ENCODE measurements at regions of chr14 and their contacts with region 1.

Region 1: GRCh38 chr14:70955543-70956480 is 48.6 kb downstream of the PCNX1 start:
- DNase-seq: no peak
- ATAC-seq: peak; percentile 52
- H3K4me3 Mint-ChIP-seq: no peak overlapping the region
- H3K27ac Mint-ChIP-seq: no peak overlapping the region
- H3K4me1 Mint-ChIP-seq: peaks cover 3% of the 10 kb centered on the region
- H3K27me3 Mint-ChIP-seq: no peaks in the 10 kb centered on the region
- CTCF ChIP-seq: no peak

Region 2: GRCh38 chr14:70873627-70874026 is 82.2 kb before region 1 on chr14:
- CTCF ChIA-PET with region 1: interaction called, 10 read pairs
- POLR2A ChIA-PET with region 1: no interaction called
- intact Hi-C with region 1: no loop called
- DNase-seq: no peak
- ATAC-seq: no peak
- H3K4me3 Mint-ChIP-seq: no peak overlapping the region
- H3K27ac Mint-ChIP-seq: no peak overlapping the region
- H3K4me1 Mint-ChIP-seq: peaks cover 6% of the 10 kb centered on the region
- H3K27me3 Mint-ChIP-seq: no peaks in the 10 kb centered on the region
- CTCF ChIP-seq: no peak

Region 3: GRCh38 chr14:70897464-70897863 is 58.3 kb before region 1 on chr14:
- CTCF ChIA-PET with region 1: no interaction called
- POLR2A ChIA-PET with region 1: no interaction called
- intact Hi-C with region 1: no loop called
- DNase-seq: no peak
- ATAC-seq: no peak
- H3K4me3 Mint-ChIP-seq: no peak overlapping the region
- H3K27ac Mint-ChIP-seq: no peak overlapping the region
- H3K4me1 Mint-ChIP-seq: no peaks in the 10 kb centered on the region
- H3K27me3 Mint-ChIP-seq: peaks cover 9% of the 10 kb centered on the region
- CTCF ChIP-seq: no peak

Region 4: DNA sequence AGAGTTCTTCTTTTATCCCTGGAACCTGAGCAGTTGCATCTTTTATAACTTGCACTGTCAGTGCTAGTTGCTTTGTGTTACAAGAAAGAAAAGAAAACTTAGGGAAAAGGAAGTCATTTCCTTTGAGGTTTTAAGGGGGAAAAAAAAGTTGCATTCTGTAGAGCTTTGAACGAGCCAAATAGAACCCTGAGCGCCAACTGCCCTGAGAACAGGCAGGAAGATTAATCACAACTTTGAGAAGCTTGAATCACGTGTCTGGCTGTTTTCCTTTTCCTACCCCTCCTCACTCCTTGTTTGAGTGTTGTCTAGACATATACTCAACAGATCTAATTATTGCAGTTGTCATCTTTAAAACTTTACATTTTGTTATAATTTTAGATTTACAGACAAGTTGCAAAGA is 36.0 kb before region 1 on chr14:
- CTCF ChIA-PET with region 1: no interaction called
- POLR2A ChIA-PET with region 1: no interaction called
- intact Hi-C with region 1: loop called (anchors 5 kb)
- DNase-seq: no peak
- ATAC-seq: no peak
- H3K4me3 Mint-ChIP-seq: peak overlapping the region; percentile 35
- H3K27ac Mint-ChIP-seq: no peak overlapping the region
- H3K4me1 Mint-ChIP-seq: peaks cover 73% of the 10 kb centered on the region
- H3K27me3 Mint-ChIP-seq: no peaks in the 10 kb centered on the region
- CTCF ChIP-seq: no peak